PC-3 (cell line): ENCODE measurements at regions of chr2 and their contacts with region 1.

Region 1: DNA sequence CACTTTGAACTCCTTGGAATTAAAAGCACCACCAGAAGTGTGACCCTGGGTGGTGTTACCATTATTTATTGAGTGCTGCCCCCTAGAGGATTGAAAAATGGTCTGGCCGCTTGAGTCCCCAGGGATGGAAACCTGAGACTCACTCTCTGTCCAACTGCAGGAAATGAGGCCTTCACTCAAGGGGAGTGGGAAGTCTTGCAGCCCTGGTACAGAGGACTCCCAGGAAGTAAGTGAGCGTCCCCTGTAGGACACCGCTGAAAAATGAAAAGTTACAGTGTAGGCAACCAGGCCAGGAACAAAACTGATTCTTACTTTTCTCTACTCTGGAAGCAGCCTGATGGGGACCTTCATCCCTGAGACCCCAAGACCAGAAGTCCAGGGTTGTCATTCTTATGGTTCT is 2.2 kb upstream of the NRP2 start:
- DNase-seq: peak; percentile 96
- ATAC-seq: peak; percentile 51
- H3K4me3 ChIP-seq: no peak overlapping the region
- H3K27ac ChIP-seq: no peak overlapping the region
- H3K4me1 ChIP-seq: peaks cover 35% of the 10 kb centered on the region
- H3K27me3 ChIP-seq: no peaks in the 10 kb centered on the region
- CTCF ChIP-seq: peak; percentile 92

Region 2: DNA sequence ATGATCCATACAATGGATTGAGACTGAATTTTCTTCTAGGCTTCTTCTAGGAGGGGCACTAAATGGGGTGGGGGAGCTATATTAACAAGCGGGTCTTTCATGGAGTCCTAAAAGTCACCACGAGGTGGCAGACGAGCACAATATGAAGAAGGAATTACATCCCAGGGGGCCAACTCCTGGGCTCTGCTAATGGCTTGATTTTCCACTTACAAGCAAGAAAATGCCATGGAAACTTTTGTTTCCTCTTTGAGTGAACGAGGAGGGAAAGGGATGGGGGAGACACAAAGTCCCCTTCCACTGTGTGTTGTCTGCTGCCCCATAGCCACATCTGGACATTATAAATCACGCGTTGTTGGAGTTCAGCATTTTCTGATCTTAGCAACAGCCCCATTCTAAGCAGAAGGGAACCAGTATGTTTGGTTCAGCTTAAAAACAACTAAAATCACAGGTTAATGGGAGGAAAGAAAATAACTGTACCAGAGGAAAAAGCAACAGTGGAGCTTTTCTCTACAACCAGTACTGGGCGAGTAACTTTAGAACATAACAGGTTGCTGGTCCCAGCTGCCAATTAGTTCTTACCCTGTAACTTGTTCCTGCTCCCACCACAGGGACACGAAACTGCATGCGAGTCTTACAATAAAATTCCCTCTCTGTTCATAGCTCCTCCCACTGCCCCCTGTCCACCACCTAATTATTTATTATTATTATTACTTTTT is 1419.7 kb before region 1 on chr2:
- CTCF ChIA-PET with region 1: no interaction called
- POLR2A ChIA-PET with region 1: no interaction called
- intact Hi-C with region 1: loop called (anchors 2 kb)
- DNase-seq: peak; percentile 84
- ATAC-seq: peak; percentile 82
- H3K4me3 ChIP-seq: no peak overlapping the region
- H3K27ac ChIP-seq: no peak overlapping the region
- H3K4me1 ChIP-seq: peaks cover 12% of the 10 kb centered on the region
- H3K27me3 ChIP-seq: 0 out of 2 replicates have a peak, but pooled peaks cover 2% of the 10 kb centered on the region
- CTCF ChIP-seq: peak; percentile 93

Region 3: DNA sequence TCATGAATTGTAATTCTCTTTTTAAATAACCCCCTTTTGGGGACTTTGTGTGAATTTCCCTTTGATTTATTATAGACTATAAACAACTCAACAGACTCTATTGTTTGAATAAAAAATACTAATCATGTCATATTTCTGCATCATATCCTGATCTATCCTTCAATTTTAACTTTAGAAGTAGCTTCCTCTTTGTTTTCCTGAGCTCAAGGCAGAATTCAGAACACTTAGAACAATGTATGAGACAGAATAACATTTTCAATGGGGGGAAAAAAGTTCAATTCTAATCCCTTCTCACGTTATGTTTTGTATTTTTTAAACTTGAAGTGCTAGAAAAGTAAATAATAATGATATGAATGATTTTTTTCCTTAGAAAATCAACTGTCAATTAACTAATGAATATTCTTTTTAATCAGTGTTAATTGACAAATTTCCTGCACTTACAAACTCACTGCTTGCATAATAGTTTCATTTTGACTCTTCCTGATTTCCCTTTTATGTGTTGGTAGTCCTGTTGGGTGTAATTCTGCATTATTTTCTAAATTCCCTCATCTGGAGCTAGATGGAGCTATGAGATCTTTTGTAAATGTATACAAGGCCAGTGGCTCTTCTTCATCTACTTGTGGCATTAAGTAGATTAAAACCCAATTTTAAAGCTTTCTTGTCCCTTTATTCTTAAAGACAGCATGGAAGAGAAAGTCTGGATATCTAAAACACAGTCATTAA is 808.7 kb before region 1 on chr2:
- CTCF ChIA-PET with region 1: interaction called, 9 read pairs
- POLR2A ChIA-PET with region 1: no interaction called
- intact Hi-C with region 1: loop called (anchors 1 kb)
- DNase-seq: peak; percentile 57
- ATAC-seq: peak; percentile 80
- H3K4me3 ChIP-seq: no peak overlapping the region
- H3K27ac ChIP-seq: no peak overlapping the region
- H3K4me1 ChIP-seq: no peaks in the 10 kb centered on the region
- H3K27me3 ChIP-seq: no peaks in the 10 kb centered on the region
- CTCF ChIP-seq: peak; percentile 67

Region 4: DNA sequence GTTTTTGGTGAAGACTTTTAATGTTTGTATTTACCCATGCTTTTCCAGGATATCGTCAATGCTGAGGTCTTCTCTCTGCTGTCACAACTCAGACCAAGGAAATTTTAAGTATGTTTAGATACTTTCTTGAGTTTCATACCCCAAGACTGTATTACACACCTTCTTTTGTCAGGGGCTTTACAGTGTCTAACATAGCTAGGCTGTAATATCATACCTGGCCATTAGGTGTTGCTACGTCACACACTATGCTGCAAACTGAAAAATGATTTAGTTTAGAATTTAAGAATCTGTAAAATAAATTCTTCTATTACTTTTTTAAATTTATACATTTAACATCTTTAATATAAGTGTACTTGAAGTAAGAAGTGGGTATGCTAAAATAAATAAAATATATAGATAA is 356.1 kb before region 1 on chr2:
- CTCF ChIA-PET with region 1: interaction called, 6 read pairs
- POLR2A ChIA-PET with region 1: no interaction called
- intact Hi-C with region 1: loop called (anchors 1 kb)
- DNase-seq: peak; percentile 54
- ATAC-seq: peak; percentile 53; the same call in 1 of the 2 replicates
- H3K4me3 ChIP-seq: no peak overlapping the region
- H3K27ac ChIP-seq: no peak overlapping the region
- H3K4me1 ChIP-seq: no peaks in the 10 kb centered on the region
- H3K27me3 ChIP-seq: no peaks in the 10 kb centered on the region
- CTCF ChIP-seq: peak; percentile 65

Region 5: GRCh38 chr2:205474741-205475415 is 205.2 kb before region 1 on chr2:
- CTCF ChIA-PET with region 1: no interaction called
- POLR2A ChIA-PET with region 1: no interaction called
- intact Hi-C with region 1: loop called (anchors 5 kb)
- DNase-seq: peak; percentile 30
- ATAC-seq: peak; percentile 52; the same call in 1 of the 2 replicates
- H3K4me3 ChIP-seq: no peak overlapping the region
- H3K27ac ChIP-seq: no peak overlapping the region
- H3K4me1 ChIP-seq: 0 out of 2 replicates have a peak, but pooled peaks cover 8% of the 10 kb centered on the region
- H3K27me3 ChIP-seq: no peaks in the 10 kb centered on the region
- CTCF ChIP-seq: no peak

Region 6: DNA sequence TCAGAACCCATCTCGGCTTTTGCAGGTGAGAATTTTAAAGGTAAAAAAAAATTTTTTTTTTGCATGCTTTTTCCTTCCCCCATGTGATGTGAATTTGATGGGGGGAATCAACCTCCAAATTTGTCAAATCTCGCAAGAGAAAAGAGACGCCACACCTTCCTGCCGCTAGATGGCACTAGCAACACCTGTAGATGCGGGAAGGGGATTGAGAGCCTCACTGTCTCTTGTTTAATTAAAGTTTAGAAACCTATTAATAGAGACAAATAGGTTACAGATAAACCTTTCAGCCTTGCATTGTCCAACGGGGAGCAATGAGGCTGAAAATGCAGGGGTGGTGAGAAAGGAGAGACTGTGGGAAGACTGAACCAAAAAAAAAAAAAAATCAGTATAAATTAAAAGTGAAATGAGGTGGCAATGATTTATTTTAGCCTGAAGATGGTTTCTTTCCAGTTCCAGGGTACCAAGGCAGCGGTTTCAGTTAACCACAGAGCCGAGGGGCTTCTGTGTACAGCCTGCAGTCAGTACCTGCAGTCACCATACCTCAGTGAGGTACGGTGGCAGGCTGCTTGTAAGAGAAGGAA is 86.8 kb after region 1 on chr2:
- CTCF ChIA-PET with region 1: interaction called, 4 read pairs
- POLR2A ChIA-PET with region 1: no interaction called
- intact Hi-C with region 1: loop called (anchors 2 kb)
- DNase-seq: peak; percentile 73
- ATAC-seq: no peak
- H3K4me3 ChIP-seq: no peak overlapping the region
- H3K27ac ChIP-seq: no peak overlapping the region
- H3K4me1 ChIP-seq: peaks cover 18% of the 10 kb centered on the region
- H3K27me3 ChIP-seq: no peaks in the 10 kb centered on the region
- CTCF ChIP-seq: peak; percentile 93

Region 7: GRCh38 chr2:205925373-205926337 is 245.6 kb after region 1 on chr2:
- CTCF ChIA-PET with region 1: no interaction called
- POLR2A ChIA-PET with region 1: no interaction called
- intact Hi-C with region 1: loop called (anchors 5 kb)
- DNase-seq: peak; percentile 75
- ATAC-seq: peak; percentile 97
- H3K4me3 ChIP-seq: peak overlapping the region; percentile 60
- H3K27ac ChIP-seq: no peak overlapping the region
- H3K4me1 ChIP-seq: 0 out of 2 replicates have a peak, but pooled peaks cover 4% of the 10 kb centered on the region
- H3K27me3 ChIP-seq: peaks cover 77% of the 10 kb centered on the region
- CTCF ChIP-seq: peak; percentile 97